ENCODE measurements at regions of chr3 and their contacts with region 1.

Region 1: DNA sequence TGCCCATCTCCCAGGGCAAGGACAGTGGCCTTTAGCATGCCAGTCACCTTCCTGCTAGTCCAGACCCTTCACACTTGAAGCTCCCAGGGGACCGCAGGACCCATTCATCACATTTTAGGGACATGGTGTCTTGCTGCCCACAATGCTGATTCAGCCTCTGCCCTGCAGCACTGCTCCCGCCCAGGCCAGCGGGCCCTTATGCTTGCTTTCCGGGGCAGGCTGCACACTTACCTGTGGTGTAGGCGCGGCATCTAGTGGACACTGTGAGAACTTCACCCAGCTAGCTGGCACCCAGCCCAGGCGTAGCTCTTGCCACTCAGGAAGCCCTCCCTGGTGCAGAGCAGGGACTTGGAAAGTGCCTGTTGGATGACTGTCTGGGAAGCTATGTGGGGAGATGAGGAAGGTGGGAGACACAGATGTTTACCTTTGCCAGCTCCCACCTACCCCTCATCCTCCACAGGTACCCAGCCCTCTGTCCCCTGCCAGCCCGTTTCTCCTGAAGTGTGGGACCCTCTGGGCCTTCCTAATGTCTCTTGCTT is 26.2 kb upstream of the NR2C2 start:
- DNase-seq: peak; percentile 69
- H3K4me3 ChIP-seq: no peak overlapping the region
- H3K27ac ChIP-seq: no peak overlapping the region
- H3K4me1 ChIP-seq: peaks cover 5% of the 10 kb centered on the region
- H3K27me3 ChIP-seq: peaks cover 4% of the 10 kb centered on the region
- CTCF ChIP-seq: peak; percentile 85 to 99

Region 2: DNA sequence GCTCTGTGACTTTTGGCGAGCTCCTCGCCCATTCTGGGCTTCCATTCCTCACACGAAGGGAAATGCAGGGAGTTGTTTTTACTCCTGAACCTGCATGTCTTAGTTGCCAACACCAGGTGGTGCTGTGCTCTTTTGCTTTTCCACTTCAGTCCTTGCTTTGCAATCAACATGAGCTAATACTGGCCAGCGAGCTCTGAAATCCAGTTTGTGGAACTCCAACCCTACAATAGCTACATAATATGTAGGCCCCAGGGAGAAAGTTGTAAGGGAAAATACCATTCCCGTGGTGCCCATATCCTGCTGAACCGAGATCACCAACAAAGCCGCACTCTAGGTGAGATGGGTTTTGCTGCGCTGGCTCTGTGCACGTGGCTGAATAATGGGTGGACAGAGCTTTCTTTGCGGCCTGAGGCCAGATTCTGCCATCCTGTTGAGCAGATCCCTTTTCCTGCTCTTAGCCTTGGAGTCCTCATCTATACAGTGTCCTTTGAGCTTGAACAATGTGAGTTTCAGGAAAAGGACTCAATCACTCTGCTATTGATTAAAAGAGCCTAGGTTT is 717.5 kb before region 1 on chr3:
- CTCF ChIA-PET with region 1: interaction called, 3 read pairs
- dilution Hi-C with region 1: no loop called
- in situ Hi-C with region 1: no loop called
- intact Hi-C with region 1: loop called (anchors 1 kb)
- DNase-seq: peak; percentile 66
- H3K4me3 ChIP-seq: no peak overlapping the region
- H3K27ac ChIP-seq: no peak overlapping the region
- H3K4me1 ChIP-seq: peaks cover 48% of the 10 kb centered on the region
- H3K27me3 ChIP-seq: no peaks in the 10 kb centered on the region
- CTCF ChIP-seq: peak; percentile 91 to 93

Region 3: DNA sequence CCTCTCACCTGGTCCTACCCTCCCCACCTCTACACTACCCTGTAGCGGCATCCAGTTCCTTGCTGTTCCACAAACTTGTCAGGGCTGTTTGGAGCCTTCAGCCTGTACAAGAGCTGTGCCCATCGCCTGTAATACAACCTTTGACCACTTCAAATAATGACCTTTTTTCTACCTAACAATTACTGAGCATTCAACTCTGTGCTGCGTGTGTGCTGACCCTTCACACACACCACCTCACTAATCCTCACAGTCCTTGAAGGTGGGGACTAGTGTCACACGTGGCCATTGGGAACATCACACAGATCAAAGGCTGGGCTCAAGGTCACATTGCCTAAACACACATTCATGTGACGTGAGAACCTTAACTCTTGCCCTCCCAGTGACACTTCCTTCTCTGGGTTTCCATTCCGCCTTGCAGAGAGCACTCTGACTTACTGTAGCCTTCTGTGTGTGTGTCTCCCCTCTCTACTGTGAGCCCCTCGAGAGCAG is 243.1 kb before region 1 on chr3:
- CTCF ChIA-PET with region 1: no interaction called
- dilution Hi-C with region 1: no loop called
- in situ Hi-C with region 1: loop called (anchors 10 kb)
- intact Hi-C with region 1: loop called (anchors 1 kb)
- DNase-seq: no peak
- H3K4me3 ChIP-seq: no peak overlapping the region
- H3K27ac ChIP-seq: no peak overlapping the region
- H3K4me1 ChIP-seq: no peaks in the 10 kb centered on the region
- H3K27me3 ChIP-seq: no peaks in the 10 kb centered on the region
- CTCF ChIP-seq: no peak

Region 4: GRCh38 chr3:14847613-14848541 is 73.3 kb before region 1 on chr3:
- CTCF ChIA-PET with region 1: no interaction called
- dilution Hi-C with region 1: loop called (anchors 5 kb)
- in situ Hi-C with region 1: no loop called
- intact Hi-C with region 1: no loop called
- DNase-seq: no peak
- H3K4me3 ChIP-seq: no peak overlapping the region
- H3K27ac ChIP-seq: no peak overlapping the region
- H3K4me1 ChIP-seq: no peaks in the 10 kb centered on the region
- H3K27me3 ChIP-seq: no peaks in the 10 kb centered on the region
- CTCF ChIP-seq: no peak

Region 5: DNA sequence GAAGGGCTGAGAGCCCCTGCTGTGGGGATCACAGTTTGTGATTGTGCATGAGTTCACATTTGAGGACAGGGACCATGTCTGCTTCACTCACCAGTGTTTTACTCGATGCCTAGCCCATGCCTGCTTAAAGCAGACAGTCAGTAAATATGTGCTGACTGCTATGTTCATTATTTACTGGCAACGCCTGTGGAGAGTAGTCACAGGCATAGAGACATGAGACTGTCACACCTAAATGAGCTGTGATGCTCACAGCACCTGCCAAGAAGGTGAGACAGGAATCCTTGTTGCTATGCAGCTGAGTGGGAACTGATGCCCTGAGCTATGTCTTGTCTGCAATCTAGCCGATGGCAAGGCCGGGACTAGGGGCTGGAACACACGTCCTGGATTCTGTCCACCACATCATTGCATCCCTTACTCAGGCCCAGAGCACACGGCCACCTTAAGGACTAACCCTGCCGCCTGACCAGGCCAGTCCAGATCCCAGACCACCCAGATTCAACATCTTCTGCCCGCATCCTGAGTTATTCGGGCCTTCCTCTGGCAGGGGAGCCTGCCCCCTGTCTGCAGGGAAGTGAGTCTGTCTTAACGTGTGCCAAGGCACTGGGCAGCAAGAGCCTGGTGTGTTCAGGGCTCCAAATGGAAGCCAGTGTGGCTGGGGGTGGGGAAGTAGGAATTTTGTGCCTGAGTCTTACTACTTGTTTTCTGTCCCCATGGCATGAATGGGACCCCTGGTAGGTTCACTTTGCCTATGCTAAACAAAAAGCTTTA is 57.6 kb before region 1 on chr3:
- CTCF ChIA-PET with region 1: no interaction called
- dilution Hi-C with region 1: no loop called
- in situ Hi-C with region 1: no loop called
- intact Hi-C with region 1: no loop called
- DNase-seq: no peak
- H3K4me3 ChIP-seq: no peak overlapping the region
- H3K27ac ChIP-seq: no peak overlapping the region
- H3K4me1 ChIP-seq: no peaks in the 10 kb centered on the region
- H3K27me3 ChIP-seq: peaks cover 12% of the 10 kb centered on the region
- CTCF ChIP-seq: peak in 1 of 2 donors; percentile 17

Region 6: GRCh38 chr3:15051531-15051930 is 130.4 kb after region 1 on chr3:
- CTCF ChIA-PET with region 1: no interaction called
- dilution Hi-C with region 1: no loop called
- in situ Hi-C with region 1: no loop called
- intact Hi-C with region 1: loop called (anchors 5 kb)
- DNase-seq: peak; percentile 34
- H3K4me3 ChIP-seq: no peak overlapping the region
- H3K27ac ChIP-seq: no peak overlapping the region
- H3K4me1 ChIP-seq: no peaks in the 10 kb centered on the region
- H3K27me3 ChIP-seq: no peaks in the 10 kb centered on the region
- CTCF ChIP-seq: peak; percentile 72 to 81